ENCODE measurements at regions of chr19 and their contacts with region 1.

Region 1: DNA sequence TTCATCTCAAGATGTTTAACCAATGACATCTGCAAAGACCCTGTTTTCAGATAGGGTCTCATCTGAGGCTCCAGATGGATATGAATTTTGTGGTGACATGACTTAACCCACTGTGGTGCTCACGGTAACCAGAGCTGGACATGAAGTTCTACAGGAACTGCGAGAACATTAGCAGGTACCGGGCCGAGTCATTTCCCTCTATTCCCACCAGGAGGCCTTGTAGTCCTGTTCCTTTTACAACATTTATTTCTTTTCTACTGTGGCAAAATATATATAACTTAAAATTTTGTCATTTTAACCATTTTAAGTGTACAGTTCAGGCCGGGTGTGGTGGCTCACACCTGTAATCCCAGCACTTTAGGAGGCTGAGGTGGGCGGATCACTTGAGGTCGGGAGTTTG is 7.6 kb upstream of the TSPAN16 start:
- DNase-seq: peak; percentile 38
- H3K4me3 ChIP-seq: no peak overlapping the region
- H3K27ac ChIP-seq: no peak overlapping the region
- H3K4me1 ChIP-seq: peaks cover 11% of the 10 kb centered on the region
- H3K27me3 ChIP-seq: no peaks in the 10 kb centered on the region
- CTCF ChIP-seq: peak; percentile 38 to 54
- POLR2A ChIP-seq: no peak

Region 2: DNA sequence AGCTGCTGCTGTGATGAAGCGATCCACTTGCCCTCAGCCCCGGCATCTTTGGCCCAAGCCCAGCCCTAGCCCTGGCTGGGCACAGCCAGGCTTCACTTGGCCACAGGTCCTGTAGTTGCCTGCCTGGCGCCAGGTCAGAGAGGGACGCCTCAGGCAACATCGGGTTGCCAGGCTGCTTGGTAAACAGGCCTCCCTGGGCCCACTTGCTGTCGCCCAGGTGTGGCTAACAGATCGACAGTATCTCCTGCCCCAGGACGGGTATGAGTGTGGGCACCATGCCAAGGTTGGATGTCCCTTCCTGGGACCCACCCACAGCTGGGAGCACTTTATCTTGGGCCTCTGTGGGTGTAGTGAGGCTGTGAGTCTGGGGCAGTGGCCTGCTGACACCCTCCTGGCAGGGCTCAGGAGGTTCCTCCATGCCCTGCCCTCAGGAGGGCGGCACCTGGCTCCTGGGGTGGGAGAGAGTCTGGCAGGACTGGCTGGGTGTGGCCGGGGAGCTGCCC is 389.1 kb before region 1 on chr19:
- CTCF ChIA-PET with region 1: no interaction called
- POLR2A ChIA-PET with region 1: no interaction called
- dilution Hi-C with region 1: no loop called
- intact Hi-C with region 1: no loop called
- DNase-seq: no peak
- H3K4me3 ChIP-seq: no peak overlapping the region
- H3K27ac ChIP-seq: no peak overlapping the region
- H3K4me1 ChIP-seq: no peaks in the 10 kb centered on the region
- H3K27me3 ChIP-seq: no peaks in the 10 kb centered on the region
- CTCF ChIP-seq: no peak
- POLR2A ChIP-seq: no peak

Region 3: GRCh38 chr19:11152318-11153062 is 135.9 kb before region 1 on chr19:
- CTCF ChIA-PET with region 1: no interaction called
- POLR2A ChIA-PET with region 1: no interaction called
- dilution Hi-C with region 1: no loop called
- intact Hi-C with region 1: no loop called
- DNase-seq: peak; percentile 67
- H3K4me3 ChIP-seq: no peak overlapping the region
- H3K27ac ChIP-seq: peak overlapping the region; percentile 68
- H3K4me1 ChIP-seq: peaks cover 22% of the 10 kb centered on the region
- H3K27me3 ChIP-seq: no peaks in the 10 kb centered on the region
- CTCF ChIP-seq: no peak
- POLR2A ChIP-seq: no peak

Region 4: GRCh38 chr19:11256189-11256588 is 32.2 kb before region 1 on chr19:
- CTCF ChIA-PET with region 1: interaction called, 25 read pairs
- POLR2A ChIA-PET with region 1: interaction called, 5 read pairs
- dilution Hi-C with region 1: no loop called
- intact Hi-C with region 1: no loop called
- DNase-seq: peak; percentile 60
- H3K4me3 ChIP-seq: no peak overlapping the region
- H3K27ac ChIP-seq: no peak overlapping the region
- H3K4me1 ChIP-seq: peaks cover 28% of the 10 kb centered on the region
- H3K27me3 ChIP-seq: no peaks in the 10 kb centered on the region
- CTCF ChIP-seq: no peak
- POLR2A ChIP-seq: no peak

Region 5: GRCh38 chr19:11268783-11269267 is 19.5 kb before region 1 on chr19:
- CTCF ChIA-PET with region 1: interaction called, 17 read pairs
- POLR2A ChIA-PET with region 1: interaction called, 4 read pairs
- dilution Hi-C with region 1: no loop called
- intact Hi-C with region 1: loop called (anchors 1 kb)
- DNase-seq: peak; percentile 100
- H3K4me3 ChIP-seq: no peak overlapping the region
- H3K27ac ChIP-seq: peak overlapping the region; percentile 99
- H3K4me1 ChIP-seq: peaks cover 47% of the 10 kb centered on the region
- H3K27me3 ChIP-seq: no peaks in the 10 kb centered on the region
- CTCF ChIP-seq: no peak
- POLR2A ChIP-seq: peak; percentile 89

Region 6: DNA sequence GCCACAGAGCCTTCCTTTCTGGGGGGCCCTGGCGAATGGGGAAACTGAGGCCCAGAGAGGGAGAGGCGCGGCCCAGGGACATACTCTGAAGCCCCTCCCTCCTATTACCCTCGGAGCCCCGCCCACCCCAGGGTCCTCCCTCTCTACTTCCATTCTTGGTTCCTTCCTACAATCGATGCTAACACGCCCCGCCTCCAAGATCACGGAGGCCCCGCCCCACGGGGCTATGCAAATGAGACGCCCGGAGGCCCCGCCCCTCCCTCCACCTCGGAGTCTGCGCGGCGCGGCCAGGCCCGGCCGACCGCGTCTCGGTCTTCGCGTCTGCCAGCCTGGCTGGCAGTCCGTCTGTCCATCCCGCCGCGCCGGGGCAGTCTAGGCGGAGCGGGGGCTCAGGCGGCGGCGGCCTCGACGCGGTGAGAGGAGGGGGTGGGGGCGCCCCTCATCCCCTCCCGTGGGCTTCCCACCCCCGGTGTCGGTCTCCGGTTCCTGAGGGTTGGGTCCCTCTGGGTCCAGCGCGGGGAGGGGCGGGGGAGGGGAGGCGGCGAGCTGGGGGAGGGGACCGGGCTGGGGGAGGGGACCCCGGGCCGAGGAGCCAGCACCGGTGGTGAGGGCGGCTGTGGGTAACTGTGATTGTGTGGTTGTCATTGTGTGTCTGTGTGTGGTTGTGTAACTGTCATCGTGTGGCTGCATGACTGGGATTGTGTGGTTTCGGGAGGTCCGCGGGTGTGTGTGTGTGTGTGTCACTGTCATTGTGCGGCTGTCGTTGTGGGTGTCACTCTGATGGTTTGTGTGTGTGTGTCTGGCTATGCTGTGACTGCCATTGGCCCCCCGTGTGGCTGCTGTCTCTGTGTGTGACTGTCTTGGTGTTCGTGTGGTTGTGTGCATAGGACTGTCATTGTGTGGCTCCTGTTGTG is 67.1 kb after region 1 on chr19 and contains the start of gene PLPPR2:
- CTCF ChIA-PET with region 1: no interaction called
- POLR2A ChIA-PET with region 1: no interaction called
- dilution Hi-C with region 1: no loop called
- intact Hi-C with region 1: no loop called
- DNase-seq: peak; percentile 94
- H3K4me3 ChIP-seq: peak within 1 kb of the TSS in 2 of 3 experiments; percentile 1 to 74
- H3K27ac ChIP-seq: no peak within 1 kb of the TSS
- H3K4me1 ChIP-seq: no peaks in the 10 kb centered on the region
- H3K27me3 ChIP-seq: no peaks in the 10 kb centered on the region
- CTCF ChIP-seq: no peak
- POLR2A ChIP-seq: peak; percentile 79
- total RNA-seq, gene PLPPR2: 22.8 and 23.7 TPM in 2 replicates

Region 7: DNA sequence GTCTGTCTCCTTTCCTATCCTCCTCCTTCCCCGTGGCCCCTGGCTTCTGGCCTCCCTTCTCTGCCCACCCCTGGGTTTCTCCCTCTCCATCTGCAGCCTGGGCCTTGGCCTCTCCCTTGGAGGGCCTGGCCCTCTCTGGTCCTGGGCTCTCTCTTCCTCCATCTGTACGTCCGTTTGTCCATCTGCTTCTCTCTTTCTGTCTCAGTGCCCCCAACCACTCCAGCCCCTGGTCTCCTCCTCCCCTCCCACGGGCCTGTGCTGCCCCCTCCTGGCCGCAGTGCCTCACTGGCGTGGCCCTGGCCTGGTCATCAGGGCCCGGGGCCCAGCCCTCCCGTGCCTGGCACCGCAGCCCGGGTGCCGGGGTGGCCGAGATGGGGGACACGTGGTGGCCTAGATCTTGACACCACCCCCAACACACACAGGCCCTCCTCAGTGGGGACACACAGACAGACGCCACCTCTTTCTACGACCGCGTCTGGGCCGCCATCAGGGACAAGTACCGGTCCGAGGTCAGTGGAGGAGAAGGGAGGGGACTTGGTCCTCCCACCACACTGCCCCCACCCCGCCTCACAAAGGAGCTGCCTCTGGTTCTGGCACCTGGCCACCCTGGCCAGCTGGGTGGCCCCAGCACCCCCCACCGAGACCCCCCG is 158.4 kb after region 1 on chr19:
- CTCF ChIA-PET with region 1: interaction called, 28 read pairs
- POLR2A ChIA-PET with region 1: no interaction called
- dilution Hi-C with region 1: no loop called
- intact Hi-C with region 1: loop called (anchors 1 kb)
- DNase-seq: peak; percentile 21
- H3K4me3 ChIP-seq: no peak overlapping the region
- H3K27ac ChIP-seq: no peak overlapping the region
- H3K4me1 ChIP-seq: no peaks in the 10 kb centered on the region
- H3K27me3 ChIP-seq: no peaks in the 10 kb centered on the region
- CTCF ChIP-seq: peak; percentile 74 to 78
- POLR2A ChIP-seq: no peak

Region 8: GRCh38 chr19:11482384-11483050 is 194.2 kb after region 1 on chr19:
- CTCF ChIA-PET with region 1: interaction called, 48 read pairs
- POLR2A ChIA-PET with region 1: no interaction called
- dilution Hi-C with region 1: no loop called
- intact Hi-C with region 1: loop called (anchors 1 kb)
- DNase-seq: peak; percentile 78
- H3K4me3 ChIP-seq: peak overlapping the region in 1 of 3 experiments; percentile 27
- H3K27ac ChIP-seq: no peak overlapping the region
- H3K4me1 ChIP-seq: peaks cover 3% of the 10 kb centered on the region
- H3K27me3 ChIP-seq: peaks cover 13 to 25% of the 10 kb centered on the region in 2 experiments
- CTCF ChIP-seq: peak; percentile 94 to 95
- POLR2A ChIP-seq: no peak